Heart left ventricle (tissue), 16 donors: ENCODE measurements at regions of chr3 and their contacts with region 1.

Region 1: GRCh38 chr3:94716326-94717010 is 653.6 kb downstream of the NSUN3 start:
- DNase-seq: no peak
- ATAC-seq: no peak
- H3K4me3 ChIP-seq: no peak overlapping the region
- H3K27ac ChIP-seq: no peak overlapping the region
- H3K4me1 ChIP-seq: no peaks in the 10 kb centered on the region
- H3K27me3 ChIP-seq: no peaks in the 10 kb centered on the region
- CTCF ChIP-seq: peak in 5 of 12 donors; percentile 6 to 26 (median 18)
- POLR2A ChIP-seq: no peak

Region 2: DNA sequence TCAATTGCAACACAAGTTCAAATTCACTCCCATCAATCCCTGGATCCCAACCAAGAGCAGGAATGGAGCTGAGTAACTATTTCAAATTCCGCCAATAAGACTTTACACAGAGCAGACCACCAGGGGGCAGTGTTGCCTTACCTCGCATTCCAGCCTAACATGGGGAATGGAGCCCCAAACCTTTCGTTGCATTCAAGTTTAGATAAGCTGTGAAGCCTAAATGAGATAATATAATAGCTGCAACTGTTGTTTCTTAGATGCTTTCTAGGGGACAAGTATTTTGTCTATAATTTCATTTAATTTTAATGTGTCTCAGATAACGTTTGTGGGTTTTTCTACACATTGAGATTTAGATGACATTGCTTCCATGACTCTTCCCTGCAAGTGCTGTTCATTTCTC is 466.9 kb before region 1 on chr3:
- intact Hi-C with region 1: loop called in 2 of 10 experiments (anchors 5 to 10 kb)
- DNase-seq: peak in 3 of 5 donors; percentile 27 to 54 (median 28)
- ATAC-seq: peak in 1 of 4 donors; percentile 54
- H3K4me3 ChIP-seq: no peak overlapping the region
- H3K27ac ChIP-seq: no peak overlapping the region
- H3K4me1 ChIP-seq: no peaks in the 10 kb centered on the region
- H3K27me3 ChIP-seq: peaks cover 0 to 7% (median 0%) of the 10 kb centered on the region in 9 donors
- CTCF ChIP-seq: peak; percentile 58 to 76 (median 70)
- POLR2A ChIP-seq: no peak

Region 3: GRCh38 chr3:94336046-94336710 is 380.3 kb before region 1 on chr3:
- intact Hi-C with region 1: loop called in 3 of 10 experiments (anchors 1 to 10 kb)
- DNase-seq: no peak
- ATAC-seq: peak in 2 of 4 donors; percentile 54 to 63
- H3K4me3 ChIP-seq: no peak overlapping the region
- H3K27ac ChIP-seq: no peak overlapping the region
- H3K4me1 ChIP-seq: no peaks in the 10 kb centered on the region
- H3K27me3 ChIP-seq: no peaks in the 10 kb centered on the region
- CTCF ChIP-seq: peak in 10 of 12 donors; percentile 11 to 55 (median 42)
- POLR2A ChIP-seq: no peak